ENCODE measurements at regions of chr3 and their contacts with region 1.

Region 1: DNA sequence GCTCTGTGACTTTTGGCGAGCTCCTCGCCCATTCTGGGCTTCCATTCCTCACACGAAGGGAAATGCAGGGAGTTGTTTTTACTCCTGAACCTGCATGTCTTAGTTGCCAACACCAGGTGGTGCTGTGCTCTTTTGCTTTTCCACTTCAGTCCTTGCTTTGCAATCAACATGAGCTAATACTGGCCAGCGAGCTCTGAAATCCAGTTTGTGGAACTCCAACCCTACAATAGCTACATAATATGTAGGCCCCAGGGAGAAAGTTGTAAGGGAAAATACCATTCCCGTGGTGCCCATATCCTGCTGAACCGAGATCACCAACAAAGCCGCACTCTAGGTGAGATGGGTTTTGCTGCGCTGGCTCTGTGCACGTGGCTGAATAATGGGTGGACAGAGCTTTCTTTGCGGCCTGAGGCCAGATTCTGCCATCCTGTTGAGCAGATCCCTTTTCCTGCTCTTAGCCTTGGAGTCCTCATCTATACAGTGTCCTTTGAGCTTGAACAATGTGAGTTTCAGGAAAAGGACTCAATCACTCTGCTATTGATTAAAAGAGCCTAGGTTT is 25.0 kb downstream of the LSM3 start:
- DNase-seq: peak; percentile 58
- H3K4me3 ChIP-seq: no peak overlapping the region
- CTCF ChIP-seq: peak; percentile 77

Region 2: GRCh38 chr3:13895155-13896105 is 308.2 kb before region 1 on chr3:
- CTCF ChIA-PET with region 1: interaction called, 17 read pairs
- POLR2A ChIA-PET with region 1: no interaction called
- DNase-seq: peak; percentile 17
- H3K4me3 ChIP-seq: peak overlapping the region; percentile 61
- CTCF ChIP-seq: no peak

Region 3: GRCh38 chr3:13916375-13916774 is 287.2 kb before region 1 on chr3:
- CTCF ChIA-PET with region 1: no interaction called
- POLR2A ChIA-PET with region 1: no interaction called
- DNase-seq: no peak
- H3K4me3 ChIP-seq: no peak overlapping the region
- CTCF ChIP-seq: no peak

Region 4: GRCh38 chr3:14031271-14031670 is 172.3 kb before region 1 on chr3:
- CTCF ChIA-PET with region 1: no interaction called
- POLR2A ChIA-PET with region 1: no interaction called
- DNase-seq: no peak
- H3K4me3 ChIP-seq: no peak overlapping the region
- CTCF ChIP-seq: no peak

Region 5: GRCh38 chr3:14222900-14223594 is 19.4 kb after region 1 on chr3:
- CTCF ChIA-PET with region 1: interaction called, 75 read pairs
- POLR2A ChIA-PET with region 1: no interaction called
- DNase-seq: no peak
- H3K4me3 ChIP-seq: no peak overlapping the region
- CTCF ChIP-seq: no peak

Region 6: GRCh38 chr3:14289590-14290461 is 86.2 kb after region 1 on chr3:
- CTCF ChIA-PET with region 1: interaction called, 15 read pairs
- POLR2A ChIA-PET with region 1: no interaction called
- DNase-seq: peak; percentile 84
- H3K4me3 ChIP-seq: no peak overlapping the region
- CTCF ChIP-seq: no peak

Region 7: GRCh38 chr3:14439579-14440518 is 236.2 kb after region 1 on chr3:
- CTCF ChIA-PET with region 1: interaction called, 12 read pairs
- POLR2A ChIA-PET with region 1: no interaction called
- DNase-seq: no peak
- H3K4me3 ChIP-seq: no peak overlapping the region
- CTCF ChIP-seq: no peak

Region 8: GRCh38 chr3:14508961-14509795 is 305.6 kb after region 1 on chr3:
- CTCF ChIA-PET with region 1: interaction called, 30 read pairs
- POLR2A ChIA-PET with region 1: no interaction called
- DNase-seq: no peak
- H3K4me3 ChIP-seq: peak overlapping the region; percentile 12; the same call in 1 of the 2 replicates
- CTCF ChIP-seq: peak; percentile 91